HEK293 (cell line): ENCODE measurements at regions of chr7 and their contacts with region 1.

Region 1: DNA sequence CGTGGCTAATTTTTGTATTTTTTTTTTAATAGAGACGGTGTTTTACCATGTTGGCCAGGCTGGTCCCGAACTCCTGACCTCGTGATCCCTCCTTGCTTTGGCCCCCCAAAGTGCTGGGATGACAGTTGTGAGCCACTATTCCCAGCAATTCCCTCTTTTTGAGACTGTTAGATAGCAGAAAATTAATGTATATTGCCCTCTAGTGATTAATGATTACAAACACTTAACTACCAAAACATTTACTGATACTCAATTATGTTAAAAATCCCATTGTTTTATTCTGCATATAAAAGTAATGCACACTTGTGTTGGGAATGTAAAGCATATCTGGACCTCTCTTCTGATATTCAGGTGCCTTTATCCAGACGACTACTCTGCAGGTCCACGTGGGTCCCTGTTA is 41.2 kb upstream of the COBL start:
- H3K4me3 ChIP-seq: no peak overlapping the region
- H3K27ac ChIP-seq: no peak overlapping the region
- H3K4me1 ChIP-seq: no peaks in the 10 kb centered on the region
- CTCF ChIP-seq: 0 out of 2 replicates have a peak, but pooled peaks have one; percentile 9

Region 2: DNA sequence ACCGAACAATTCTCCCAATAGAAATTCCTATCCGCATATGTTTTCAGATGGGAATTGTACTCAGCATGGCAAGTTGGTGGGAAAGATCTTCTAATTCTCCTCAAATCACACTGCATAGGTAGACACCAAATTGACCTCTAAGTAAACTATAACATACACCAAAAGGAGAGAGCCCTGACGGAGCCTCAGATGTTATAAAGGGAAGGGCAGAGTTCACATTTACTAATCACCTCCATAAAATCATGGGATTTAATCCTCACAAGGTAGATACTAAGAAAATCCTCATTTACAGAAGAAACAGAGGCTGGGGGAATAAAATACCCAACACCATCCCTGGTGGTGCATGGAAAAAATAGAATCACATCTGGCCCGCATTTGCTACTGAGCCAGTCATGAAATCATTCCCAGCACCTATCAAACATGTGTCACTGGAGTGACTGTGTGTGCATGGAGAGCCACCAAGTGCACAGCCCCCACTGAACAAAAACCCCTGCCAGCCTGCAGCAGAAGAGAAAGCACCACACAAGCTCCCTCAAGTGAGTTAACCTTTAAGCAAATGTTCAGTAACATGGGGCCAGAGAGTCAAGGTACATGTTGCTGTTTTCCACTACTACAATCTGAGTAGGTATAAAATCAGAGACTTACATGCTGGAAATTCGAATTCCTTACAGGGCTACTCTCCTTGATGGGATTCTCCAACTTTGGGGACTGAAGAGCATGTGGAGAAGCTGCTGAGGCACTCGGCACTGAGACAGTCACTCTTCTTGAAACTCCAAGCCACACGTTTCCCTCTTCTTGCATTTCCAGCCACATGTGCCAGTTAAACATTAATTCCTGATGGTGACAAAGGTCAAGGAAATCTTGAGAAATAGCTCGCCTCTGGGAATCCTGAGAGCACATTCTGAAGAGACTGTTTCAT is 792.9 kb before region 1 on chr7 and contains the start of gene DDC:
- CTCF ChIA-PET with region 1: no interaction called
- POLR2A ChIA-PET with region 1: no interaction called
- H3K4me3 ChIP-seq: no peak within 1 kb of the TSS
- H3K27ac ChIP-seq: no peak within 1 kb of the TSS
- H3K4me1 ChIP-seq: no peaks in the 10 kb centered on the region
- CTCF ChIP-seq: no peak

Region 3: DNA sequence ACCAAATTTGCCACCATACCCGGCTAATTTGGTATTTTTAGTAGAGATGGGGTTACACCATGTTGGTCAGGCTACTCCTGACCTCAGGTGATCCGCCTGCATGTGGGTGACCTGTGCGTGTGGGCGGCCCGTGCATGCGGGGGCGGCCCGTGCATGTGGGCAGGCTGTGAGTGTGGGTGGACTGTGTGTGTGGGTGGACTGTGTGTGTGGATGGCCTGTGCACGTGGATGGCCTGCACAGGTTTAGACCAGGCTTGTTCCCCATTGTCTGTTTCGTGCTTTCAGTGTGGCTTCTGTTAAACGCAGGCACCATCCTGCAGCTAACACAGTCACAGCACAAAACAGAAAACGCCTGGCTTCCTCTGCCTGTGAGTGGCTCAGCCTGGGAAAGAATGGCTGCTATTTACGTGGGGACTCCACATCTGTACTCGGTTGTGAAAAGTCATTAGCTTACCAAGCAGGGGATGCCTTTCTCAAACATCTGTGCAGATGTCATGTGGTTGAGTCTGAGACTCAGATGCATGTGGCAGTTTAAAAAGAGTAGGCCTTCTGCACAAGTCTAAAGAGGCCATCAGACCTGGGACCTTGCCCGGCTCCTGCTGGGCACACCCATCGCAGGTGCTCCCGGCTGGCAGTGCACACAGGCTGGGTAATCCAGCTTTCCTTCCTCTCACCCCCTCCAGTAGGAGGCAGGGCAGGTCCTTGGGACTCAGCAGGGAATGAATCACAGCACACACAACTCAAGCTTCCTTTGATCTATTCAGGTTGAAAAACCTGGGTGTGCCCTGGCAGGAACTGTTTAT is 132.8 kb before region 1 on chr7:
- CTCF ChIA-PET with region 1: interaction called, 10 read pairs
- POLR2A ChIA-PET with region 1: no interaction called
- H3K4me3 ChIP-seq: no peak overlapping the region
- H3K27ac ChIP-seq: no peak overlapping the region
- H3K4me1 ChIP-seq: no peaks in the 10 kb centered on the region; the same call in 1 of the 2 replicates
- CTCF ChIP-seq: no peak

Region 4: DNA sequence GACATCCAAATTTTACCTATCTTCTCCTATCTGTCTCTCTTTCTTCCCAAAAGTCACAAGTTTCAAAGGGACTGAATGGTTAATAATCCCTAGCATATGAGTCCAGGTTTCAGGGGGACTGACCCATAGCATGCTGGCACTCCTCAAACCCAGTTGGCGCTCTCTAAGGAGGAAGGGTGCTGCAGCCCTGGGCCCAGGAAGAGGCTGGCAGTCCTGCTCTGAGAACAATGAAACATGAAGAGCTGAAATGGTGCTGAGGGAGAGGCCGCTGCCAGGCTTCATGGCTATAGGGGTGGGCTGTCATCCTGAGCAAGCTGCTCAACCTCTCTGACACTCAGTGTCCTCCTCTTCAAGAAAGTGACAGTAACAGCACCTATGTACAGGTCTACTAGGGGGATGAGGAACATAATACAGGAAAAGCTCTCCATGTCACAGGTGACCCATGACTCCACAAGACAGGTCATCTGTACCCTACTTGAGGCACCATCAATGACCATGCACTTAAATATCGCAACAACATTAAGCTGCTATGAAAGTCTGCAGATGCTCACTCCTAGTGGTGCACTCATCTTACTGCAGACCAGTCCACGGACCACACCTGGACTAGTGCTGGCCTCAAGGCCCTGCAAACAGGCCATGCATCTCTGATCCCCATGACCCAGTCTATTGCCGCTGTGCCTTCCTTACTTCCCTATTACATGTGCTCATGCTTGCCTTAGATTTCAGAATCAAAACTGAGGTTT is 58.3 kb before region 1 on chr7:
- CTCF ChIA-PET with region 1: no interaction called
- POLR2A ChIA-PET with region 1: no interaction called
- H3K4me3 ChIP-seq: no peak overlapping the region
- H3K27ac ChIP-seq: no peak overlapping the region
- H3K4me1 ChIP-seq: peaks cover 13% of the 10 kb centered on the region
- CTCF ChIP-seq: no peak

Region 5: DNA sequence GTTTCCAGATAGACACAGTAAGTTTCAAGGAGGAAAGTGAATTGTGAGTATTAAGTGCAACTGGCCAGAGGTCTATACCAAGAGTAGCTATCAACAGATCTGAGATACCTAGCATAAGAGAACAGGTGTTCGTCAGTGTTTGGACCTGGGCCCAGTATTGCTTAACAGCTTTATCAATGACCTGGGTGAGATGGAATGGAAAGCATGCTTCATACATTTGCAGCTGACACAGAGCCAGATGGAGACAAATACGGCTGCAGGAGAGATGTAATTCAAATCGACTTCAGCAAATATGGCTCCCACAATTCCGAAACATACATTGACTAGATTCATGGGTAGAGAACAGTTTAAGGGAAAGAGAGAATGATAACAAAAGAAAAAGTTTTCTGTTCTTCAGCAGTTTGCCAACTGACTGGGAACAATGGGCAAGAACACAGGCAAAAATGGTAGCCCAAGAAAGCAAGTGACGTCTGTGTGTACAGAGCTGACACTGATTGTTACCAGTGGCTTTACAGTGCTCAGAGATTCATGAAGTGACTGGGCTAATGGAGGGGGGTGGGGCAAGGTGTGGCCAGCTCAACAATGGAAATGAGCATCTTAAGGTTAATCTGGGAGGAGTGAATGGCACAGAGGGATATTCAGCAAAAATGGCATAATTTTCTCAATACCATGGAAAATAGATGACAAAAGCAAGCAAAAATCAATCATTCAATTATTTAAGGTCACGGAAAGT is 13.2 kb before region 1 on chr7:
- CTCF ChIA-PET with region 1: no interaction called
- POLR2A ChIA-PET with region 1: no interaction called
- H3K4me3 ChIP-seq: no peak overlapping the region
- H3K27ac ChIP-seq: no peak overlapping the region
- H3K4me1 ChIP-seq: peaks cover under 1% of the 10 kb centered on the region; the same call in 1 of the 2 replicates
- CTCF ChIP-seq: no peak